CD14-positive monocyte (primary cell): ENCODE measurements at regions of chr10 and their contacts with region 1.

Region 1: DNA sequence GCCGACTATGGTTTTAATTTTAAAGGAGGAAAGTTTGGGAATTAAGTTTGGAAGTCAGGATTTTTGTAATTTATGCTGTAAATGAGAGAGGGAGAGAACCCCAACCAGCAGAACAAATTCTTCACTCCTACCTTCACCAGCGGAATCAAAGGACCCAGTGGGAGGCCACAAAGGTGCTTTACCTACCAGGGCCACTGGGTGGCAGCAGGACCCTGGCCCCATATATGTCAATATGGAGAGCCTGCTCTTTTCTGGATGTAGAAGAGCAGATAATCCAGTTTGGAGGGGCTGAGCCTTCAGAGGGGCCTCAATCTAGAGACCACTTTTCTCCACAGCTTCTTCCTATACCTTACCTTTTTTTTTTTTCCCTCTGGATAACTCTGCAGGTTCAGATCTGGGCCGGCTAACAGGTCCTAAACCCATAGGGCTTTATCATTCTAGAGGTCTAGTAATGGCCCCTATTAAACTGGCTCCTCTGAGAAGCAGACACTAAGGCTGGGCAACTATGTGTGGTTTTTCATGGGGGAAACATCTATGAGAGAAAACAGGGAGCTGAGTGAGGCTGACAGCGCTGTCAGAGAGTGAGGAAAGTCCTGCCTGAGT is 8.5 kb upstream of the SCD start:
- DNase-seq: peak; percentile 52 to 72 (median 61)
- H3K4me3 ChIP-seq: peak overlapping the region in 1 of 3 experiments; percentile 28
- H3K4me3 Mint-ChIP-seq: no peak overlapping the region
- H3K27ac ChIP-seq: peak overlapping the region in 1 of 2 donors; percentile 14
- H3K27ac Mint-ChIP-seq: peak overlapping the region in 6 of 7 donors; percentile 31 to 89 (median 64)
- H3K4me1 ChIP-seq: peaks cover 17 to 28% of the 10 kb centered on the region in 2 donors
- H3K4me1 Mint-ChIP-seq: peaks cover 30% of the 10 kb centered on the region
- H3K27me3 ChIP-seq: no peaks in the 10 kb centered on the region
- H3K27me3 Mint-ChIP-seq: peaks cover 5 to 10% (median 7%) of the 10 kb centered on the region in 3 donors
- CTCF ChIP-seq: peak; percentile 92

Region 2: DNA sequence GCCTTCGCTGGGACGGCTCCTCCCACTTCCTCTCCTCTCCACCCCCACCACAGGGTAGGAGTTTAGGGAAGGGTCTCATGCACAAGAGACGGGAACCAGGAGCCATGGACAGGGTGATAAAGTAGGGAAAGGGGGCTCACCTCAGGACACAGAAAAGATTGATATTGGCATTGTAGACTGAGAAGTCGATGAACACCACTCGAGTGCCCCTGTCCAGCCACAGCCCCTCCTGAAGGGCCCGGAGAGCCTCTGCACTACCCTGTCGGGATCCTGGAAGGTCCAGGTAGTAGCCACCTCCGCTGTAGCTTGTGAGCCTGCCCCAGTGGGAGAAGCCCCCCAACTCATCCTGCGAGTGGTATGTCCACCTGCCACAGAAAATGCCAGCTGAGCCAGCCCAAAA is 41.3 kb before region 1 on chr10:
- intact Hi-C with region 1: loop called in 1 of 2 experiments (anchors 5 kb)
- DNase-seq: no peak
- H3K4me3 ChIP-seq: no peak overlapping the region
- H3K4me3 Mint-ChIP-seq: no peak overlapping the region
- H3K27ac ChIP-seq: no peak overlapping the region
- H3K27ac Mint-ChIP-seq: peak overlapping the region in 1 of 7 donors; percentile 12
- H3K4me1 ChIP-seq: peaks cover 18% of the 10 kb centered on the region in 2 donors
- H3K4me1 Mint-ChIP-seq: peaks cover 22% of the 10 kb centered on the region
- H3K27me3 ChIP-seq: peaks cover 0 to 2% of the 10 kb centered on the region in 2 donors
- H3K27me3 Mint-ChIP-seq: peaks cover 24 to 28% (median 24%) of the 10 kb centered on the region in 3 donors
- CTCF ChIP-seq: no peak

Region 3: GRCh38 chr10:100319707-100320106 is 18.8 kb before region 1 on chr10:
- intact Hi-C with region 1: no loop called
- DNase-seq: no peak
- H3K4me3 ChIP-seq: no peak overlapping the region
- H3K4me3 Mint-ChIP-seq: no peak overlapping the region
- H3K27ac ChIP-seq: no peak overlapping the region
- H3K27ac Mint-ChIP-seq: no peak overlapping the region
- H3K4me1 ChIP-seq: no peaks in the 10 kb centered on the region
- H3K4me1 Mint-ChIP-seq: no peaks in the 10 kb centered on the region
- H3K27me3 ChIP-seq: peaks cover 9 to 19% of the 10 kb centered on the region in 2 donors
- H3K27me3 Mint-ChIP-seq: peaks cover 4 to 19% (median 9%) of the 10 kb centered on the region in 3 donors
- CTCF ChIP-seq: no peak

Region 4: GRCh38 chr10:100373298-100374136 is 35.0 kb after region 1 on chr10:
- intact Hi-C with region 1: loop called (anchors 5 kb)
- DNase-seq: peak; percentile 86 to 95 (median 92)
- H3K4me3 ChIP-seq: peak overlapping the region; percentile 48 to 84 (median 62)
- H3K4me3 Mint-ChIP-seq: no peak overlapping the region
- H3K27ac ChIP-seq: peak overlapping the region; percentile 60 to 77
- H3K27ac Mint-ChIP-seq: no peak overlapping the region
- H3K4me1 ChIP-seq: peaks cover 46% of the 10 kb centered on the region in 2 donors
- H3K4me1 Mint-ChIP-seq: peaks cover 29% of the 10 kb centered on the region
- H3K27me3 ChIP-seq: no peaks in the 10 kb centered on the region
- H3K27me3 Mint-ChIP-seq: peaks cover 0 to 3% (median 2%) of the 10 kb centered on the region in 3 donors
- CTCF ChIP-seq: no peak

Region 5: DNA sequence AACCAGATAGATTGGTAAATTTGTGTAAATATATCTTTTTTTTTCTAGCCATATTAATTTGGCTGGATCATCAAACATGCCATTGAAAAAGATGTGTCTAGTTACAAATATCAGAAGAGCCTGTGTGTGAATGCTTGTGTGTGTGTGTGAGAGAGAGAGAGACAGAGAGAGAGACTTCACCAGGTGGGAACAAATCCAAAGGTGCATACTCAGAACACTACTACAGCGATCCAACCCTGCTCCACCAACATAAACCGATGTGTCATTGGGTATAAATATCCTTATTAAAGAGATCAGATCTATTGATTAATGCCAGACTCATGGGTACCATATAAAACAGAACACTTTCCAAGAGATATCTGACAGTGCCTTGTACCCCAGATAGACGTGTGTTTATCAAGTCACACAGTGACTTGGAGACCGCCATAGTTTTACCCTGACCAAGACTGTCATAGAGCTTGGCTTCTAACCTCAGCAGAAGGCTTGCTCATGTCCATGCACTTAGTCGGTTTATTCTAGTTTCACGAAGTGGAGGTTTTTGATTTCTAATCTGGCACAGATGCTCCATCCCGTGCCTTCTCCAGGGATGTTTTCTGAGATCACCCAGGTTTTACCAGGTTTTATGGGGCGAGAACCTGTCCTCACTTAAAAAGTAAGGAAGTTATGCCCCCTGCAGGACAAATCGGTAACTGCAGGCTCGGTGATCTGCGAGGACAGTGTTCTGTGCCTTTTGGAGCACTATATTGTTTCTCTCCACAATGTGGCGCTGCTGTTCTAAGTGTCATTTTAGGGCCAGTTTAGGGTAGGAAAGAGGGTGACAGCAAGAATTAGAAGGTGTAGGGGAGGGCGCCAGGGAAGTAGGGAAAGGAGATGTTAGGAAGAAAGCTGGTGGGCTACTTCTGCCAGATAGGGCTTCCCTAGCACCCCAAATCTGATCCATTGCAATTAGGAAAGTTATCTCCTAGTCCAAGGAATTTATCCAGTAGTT is 95.0 kb after region 1 on chr10:
- intact Hi-C with region 1: loop called (anchors 1 to 5 kb)
- DNase-seq: peak; percentile 84 to 87 (median 85)
- H3K4me3 ChIP-seq: no peak overlapping the region
- H3K4me3 Mint-ChIP-seq: no peak overlapping the region
- H3K27ac ChIP-seq: no peak overlapping the region
- H3K27ac Mint-ChIP-seq: no peak overlapping the region
- H3K4me1 ChIP-seq: no peaks in the 10 kb centered on the region
- H3K4me1 Mint-ChIP-seq: no peaks in the 10 kb centered on the region
- H3K27me3 ChIP-seq: no peaks in the 10 kb centered on the region
- H3K27me3 Mint-ChIP-seq: peaks cover 3 to 7% (median 4%) of the 10 kb centered on the region in 3 donors
- CTCF ChIP-seq: peak; percentile 98

Region 6: DNA sequence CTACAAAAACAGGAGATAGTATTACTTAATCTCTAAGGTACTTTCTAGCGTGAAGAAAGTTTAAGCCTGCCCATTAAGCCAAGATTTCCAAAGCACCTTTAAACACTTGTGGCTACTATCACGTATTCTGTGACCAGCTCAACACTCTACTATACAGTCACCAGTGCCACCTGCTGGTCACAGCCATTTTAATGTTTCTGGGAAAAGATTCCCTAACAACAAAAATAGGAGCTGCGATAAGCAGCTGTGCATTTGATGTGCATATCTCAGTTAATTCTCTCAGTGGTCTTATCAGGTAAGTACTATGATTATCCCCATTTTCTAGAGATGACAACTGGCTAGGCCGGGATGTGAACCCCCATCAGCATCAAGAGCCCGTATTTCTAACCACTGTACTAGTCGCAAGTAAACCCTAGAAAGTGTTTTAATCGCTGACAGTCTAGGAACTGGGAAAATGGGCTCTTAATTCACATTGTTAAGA is 180.3 kb after region 1 on chr10:
- intact Hi-C with region 1: loop called in 1 of 2 experiments (anchors 5 kb)
- DNase-seq: peak; percentile 19 to 59 (median 37)
- H3K4me3 ChIP-seq: no peak overlapping the region
- H3K4me3 Mint-ChIP-seq: peak overlapping the region in 1 of 2 donors; percentile 84
- H3K27ac ChIP-seq: no peak overlapping the region
- H3K27ac Mint-ChIP-seq: no peak overlapping the region
- H3K4me1 ChIP-seq: peaks cover 5 to 10% of the 10 kb centered on the region in 2 donors
- H3K4me1 Mint-ChIP-seq: peaks cover 12% of the 10 kb centered on the region
- H3K27me3 ChIP-seq: peaks cover 16 to 18% of the 10 kb centered on the region in 2 donors
- H3K27me3 Mint-ChIP-seq: peaks cover 20 to 24% (median 22%) of the 10 kb centered on the region in 3 donors
- CTCF ChIP-seq: peak; percentile 82